Naive thymus-derived CD4-positive, alpha-beta T cell (primary cell): ENCODE measurements at regions of chr10 and their contacts with region 1.

Region 1: DNA sequence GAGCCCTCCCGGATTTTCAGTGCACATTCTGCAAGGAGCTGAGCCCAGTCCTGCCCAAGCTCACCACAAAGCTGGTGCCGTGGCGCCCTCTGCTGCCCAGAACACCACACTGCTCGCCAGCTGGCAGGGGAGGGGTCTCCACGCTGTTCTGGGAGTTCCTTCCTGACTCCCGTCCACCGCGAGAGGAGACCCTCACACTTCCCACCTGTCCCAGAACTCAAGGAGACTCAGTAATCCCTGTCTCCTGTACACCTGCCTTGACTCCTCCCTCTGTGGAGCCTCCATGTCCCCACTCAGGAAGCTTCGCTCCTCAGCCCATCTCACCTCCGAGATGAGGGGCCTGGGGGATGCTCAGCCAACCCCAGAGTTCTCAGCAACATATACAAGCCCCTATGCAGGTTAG is 11.3 kb downstream of the C10orf105 start:
- DNase-seq: peak; percentile 48 to 75 (median 59)
- ATAC-seq: peak; percentile 82
- H3K4me3 ChIP-seq: no peak overlapping the region
- H3K4me3 Mint-ChIP-seq: peak overlapping the region in 1 of 10 donors; percentile 27
- H3K27ac ChIP-seq: no peak overlapping the region
- H3K27ac Mint-ChIP-seq: peak overlapping the region in 2 of 9 donors; percentile 13 to 79
- H3K4me1 ChIP-seq: peaks cover 23 to 27% of the 10 kb centered on the region in 2 donors
- H3K4me1 Mint-ChIP-seq: peaks cover 21 to 61% (median 47%) of the 10 kb centered on the region in 7 donors
- H3K27me3 ChIP-seq: no peaks in the 10 kb centered on the region
- H3K27me3 Mint-ChIP-seq: no peaks in the 10 kb centered on the region

Region 2: DNA sequence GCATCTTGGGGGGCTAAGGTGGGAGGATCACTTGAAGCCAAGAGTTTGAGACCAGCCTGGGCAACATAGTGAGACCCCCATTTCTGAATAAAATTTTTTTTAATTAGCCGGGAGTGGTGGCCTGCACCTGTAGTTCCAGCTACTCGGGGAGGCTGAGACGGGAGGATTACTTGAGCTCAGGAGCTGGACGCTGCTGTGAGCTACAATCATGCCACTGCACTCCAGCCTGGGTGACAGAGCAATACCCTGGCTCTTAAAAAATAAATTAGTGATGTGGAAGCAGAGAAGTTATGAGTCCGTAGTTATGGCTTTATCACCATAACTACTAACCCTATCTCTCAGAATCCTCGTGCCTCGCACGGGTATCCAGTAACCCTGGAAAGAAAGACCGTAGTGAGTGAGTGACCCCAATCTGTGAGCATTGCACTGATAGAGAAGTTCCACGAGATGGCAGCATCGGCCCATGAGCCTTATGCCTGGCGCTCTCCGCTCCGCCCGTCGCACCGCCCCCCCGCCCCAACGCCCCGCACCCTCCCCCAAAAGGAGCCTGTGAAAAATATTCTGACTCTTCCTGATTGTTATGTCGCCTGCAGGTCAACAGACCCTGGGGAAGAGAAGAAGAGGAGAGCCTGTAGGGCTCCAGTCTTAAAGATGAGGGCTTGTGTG is 394.1 kb before region 1 on chr10:
- CTCF ChIA-PET with region 1: interaction called, 24 read pairs
- POLR2A ChIA-PET with region 1: interaction called, 3 read pairs
- intact Hi-C with region 1: loop called (anchors 1 kb)
- DNase-seq: peak; percentile 18 to 56 (median 49)
- ATAC-seq: peak; percentile 62
- H3K4me3 ChIP-seq: no peak overlapping the region
- H3K4me3 Mint-ChIP-seq: peak overlapping the region in 3 of 10 donors; percentile 3 to 48 (median 25)
- H3K27ac ChIP-seq: no peak overlapping the region
- H3K27ac Mint-ChIP-seq: peak overlapping the region in 1 of 9 donors; percentile 55
- H3K4me1 ChIP-seq: peaks cover 5 to 6% of the 10 kb centered on the region in 2 donors
- H3K4me1 Mint-ChIP-seq: peaks cover 0 to 26% (median 13%) of the 10 kb centered on the region in 7 donors
- H3K27me3 ChIP-seq: no peaks in the 10 kb centered on the region
- H3K27me3 Mint-ChIP-seq: peaks cover 0 to 16% (median 14%) of the 10 kb centered on the region in 5 donors

Region 3: DNA sequence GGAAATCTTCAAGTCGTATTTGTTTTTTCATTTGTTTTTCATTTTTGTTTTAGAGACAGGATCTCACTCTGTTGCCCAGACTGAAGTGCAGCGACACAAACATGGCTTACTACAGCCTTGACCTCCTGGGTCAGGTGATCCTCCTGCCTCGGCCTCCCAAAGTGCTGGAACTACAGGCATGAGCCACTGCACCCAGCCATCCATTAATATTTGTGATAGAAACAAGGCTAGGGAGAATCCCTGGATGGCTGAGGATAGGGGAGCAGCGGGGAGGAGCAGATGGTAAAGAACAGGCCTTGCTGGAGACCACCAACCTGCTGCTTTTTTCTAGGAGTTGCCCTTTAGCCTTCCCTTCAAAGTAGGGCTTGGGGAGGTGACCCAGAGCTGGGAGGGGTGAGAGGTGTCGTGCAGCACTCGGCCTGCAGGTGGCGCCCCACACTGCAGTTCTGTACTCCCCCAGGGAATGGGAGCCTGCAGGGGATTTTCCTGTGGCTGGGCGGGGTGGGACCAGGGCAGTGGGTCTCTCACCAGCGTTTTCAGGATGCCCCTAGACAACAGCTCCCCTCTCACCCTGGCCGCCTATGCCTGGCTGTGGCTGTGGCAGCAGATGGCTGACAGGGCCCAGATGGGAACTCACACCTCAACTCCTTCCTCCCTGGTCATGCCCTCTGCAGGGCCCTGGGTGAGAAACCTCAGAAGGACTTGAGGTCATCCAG is 324.2 kb before region 1 on chr10:
- CTCF ChIA-PET with region 1: interaction called, 11 read pairs
- POLR2A ChIA-PET with region 1: no interaction called
- intact Hi-C with region 1: loop called (anchors 1 kb)
- DNase-seq: peak; percentile 40 to 82 (median 61)
- ATAC-seq: peak; percentile 94
- H3K4me3 ChIP-seq: no peak overlapping the region
- H3K4me3 Mint-ChIP-seq: no peak overlapping the region
- H3K27ac ChIP-seq: no peak overlapping the region
- H3K27ac Mint-ChIP-seq: no peak overlapping the region
- H3K4me1 ChIP-seq: no peaks in the 10 kb centered on the region
- H3K4me1 Mint-ChIP-seq: no peaks in the 10 kb centered on the region
- H3K27me3 ChIP-seq: no peaks in the 10 kb centered on the region
- H3K27me3 Mint-ChIP-seq: peaks cover 0 to 24% (median 7%) of the 10 kb centered on the region in 5 donors

Region 4: DNA sequence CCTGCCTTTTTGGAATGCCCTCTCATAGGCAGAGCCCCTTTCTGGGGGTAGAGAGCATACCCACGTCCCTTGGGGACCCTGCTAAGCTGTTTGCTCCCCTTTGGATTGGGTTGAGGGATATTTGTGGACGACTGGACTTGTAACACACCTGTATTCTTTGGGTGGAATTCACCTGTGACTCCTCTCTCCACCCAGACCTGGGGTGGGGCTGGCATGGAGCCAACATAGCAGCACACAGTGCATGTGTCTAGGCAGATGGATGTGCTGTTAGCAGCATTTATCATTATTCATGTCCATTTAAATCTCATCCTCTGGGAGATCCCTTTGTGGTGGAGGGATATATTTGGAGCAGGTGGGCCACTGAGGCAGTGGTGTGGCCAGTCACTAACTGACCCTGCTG is 260.6 kb before region 1 on chr10:
- CTCF ChIA-PET with region 1: no interaction called
- POLR2A ChIA-PET with region 1: no interaction called
- intact Hi-C with region 1: no loop called
- DNase-seq: no peak
- ATAC-seq: no peak
- H3K4me3 ChIP-seq: no peak overlapping the region
- H3K4me3 Mint-ChIP-seq: no peak overlapping the region
- H3K27ac ChIP-seq: no peak overlapping the region
- H3K27ac Mint-ChIP-seq: no peak overlapping the region
- H3K4me1 ChIP-seq: no peaks in the 10 kb centered on the region
- H3K4me1 Mint-ChIP-seq: no peaks in the 10 kb centered on the region
- H3K27me3 ChIP-seq: no peaks in the 10 kb centered on the region
- H3K27me3 Mint-ChIP-seq: no peaks in the 10 kb centered on the region

Region 5: DNA sequence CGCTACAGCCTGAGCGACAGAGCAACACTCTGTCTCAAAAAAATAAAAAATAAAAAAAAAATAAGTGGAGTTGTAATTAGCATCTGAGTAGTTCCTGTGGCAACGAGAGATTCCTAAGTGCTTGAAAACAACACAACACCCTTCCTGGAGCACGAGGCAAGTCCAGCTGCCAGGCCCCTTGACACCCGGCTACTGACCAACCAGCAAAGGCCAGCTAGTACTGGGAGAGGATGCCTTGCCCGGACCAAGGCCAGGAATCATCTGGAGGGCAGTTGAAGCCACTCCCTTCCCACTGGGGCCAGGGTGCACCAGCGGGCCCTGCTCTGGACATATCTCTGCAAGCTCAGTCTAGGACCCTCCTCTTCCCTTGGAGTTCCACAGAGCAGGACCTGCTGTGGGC is 10.7 kb after region 1 on chr10:
- CTCF ChIA-PET with region 1: interaction called, 25 read pairs
- POLR2A ChIA-PET with region 1: interaction called, 150 read pairs
- intact Hi-C with region 1: no loop called
- DNase-seq: no peak
- ATAC-seq: no peak
- H3K4me3 ChIP-seq: no peak overlapping the region
- H3K4me3 Mint-ChIP-seq: no peak overlapping the region
- H3K27ac ChIP-seq: no peak overlapping the region
- H3K27ac Mint-ChIP-seq: peak overlapping the region in 3 of 9 donors; percentile 32 to 49 (median 41)
- H3K4me1 ChIP-seq: peaks cover 26 to 43% of the 10 kb centered on the region in 2 donors
- H3K4me1 Mint-ChIP-seq: peaks cover 25 to 74% (median 44%) of the 10 kb centered on the region in 7 donors
- H3K27me3 ChIP-seq: no peaks in the 10 kb centered on the region
- H3K27me3 Mint-ChIP-seq: no peaks in the 10 kb centered on the region

Region 6: GRCh38 chr10:71748671-71749191 is 40.4 kb after region 1 on chr10:
- CTCF ChIA-PET with region 1: interaction called, 13 read pairs
- POLR2A ChIA-PET with region 1: interaction called, 521 read pairs
- intact Hi-C with region 1: loop called (anchors 5 kb)
- DNase-seq: peak; percentile 53 to 93 (median 88)
- ATAC-seq: peak; percentile 87
- H3K4me3 ChIP-seq: peak overlapping the region; percentile 40
- H3K4me3 Mint-ChIP-seq: peak overlapping the region; percentile 74 to 90 (median 85)
- H3K27ac ChIP-seq: peak overlapping the region; percentile 74
- H3K27ac Mint-ChIP-seq: peak overlapping the region; percentile 95 to 99 (median 98)
- H3K4me1 ChIP-seq: peaks cover 93 to 99% of the 10 kb centered on the region in 2 donors
- H3K4me1 Mint-ChIP-seq: peaks cover 80 to 98% (median 93%) of the 10 kb centered on the region in 7 donors
- H3K27me3 ChIP-seq: no peaks in the 10 kb centered on the region
- H3K27me3 Mint-ChIP-seq: no peaks in the 10 kb centered on the region

Region 7: DNA sequence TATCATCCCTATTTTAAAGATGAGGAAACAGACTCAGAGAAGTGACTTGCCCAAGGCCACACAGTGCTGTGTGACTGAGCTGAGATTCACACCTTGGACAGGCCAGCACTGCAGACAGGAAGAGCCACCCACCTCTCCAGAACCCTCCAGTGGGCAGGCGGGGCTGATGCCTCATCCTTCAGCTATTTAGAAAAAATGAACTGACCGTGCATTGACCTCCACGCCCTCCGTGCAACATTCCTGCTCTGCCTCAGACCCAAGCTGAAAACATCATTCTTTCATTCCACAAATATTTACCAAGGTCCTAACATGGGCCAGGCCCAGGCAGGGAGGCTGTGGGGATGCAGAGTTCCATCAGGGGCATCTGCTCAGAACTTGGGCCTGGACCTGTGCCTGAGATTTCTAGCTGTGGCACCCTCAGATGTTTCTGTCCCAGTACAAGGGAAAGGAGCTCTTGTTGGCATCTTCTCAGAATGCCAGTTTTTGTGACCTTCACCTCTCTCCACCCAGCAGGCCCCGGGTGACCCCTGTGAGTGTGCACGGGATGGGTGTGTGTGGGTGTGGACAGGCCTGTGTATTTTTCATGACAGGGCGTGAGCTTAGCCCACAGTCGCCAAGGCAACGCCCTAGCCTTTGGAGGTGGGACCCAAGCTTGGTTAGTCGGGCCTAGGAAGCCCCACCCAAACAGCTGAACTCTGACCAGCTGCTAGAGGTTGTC is 58.6 kb after region 1 on chr10:
- CTCF ChIA-PET with region 1: interaction called, 38 read pairs
- POLR2A ChIA-PET with region 1: interaction called, 54 read pairs
- intact Hi-C with region 1: no loop called
- DNase-seq: no peak
- ATAC-seq: peak; percentile 36
- H3K4me3 ChIP-seq: no peak overlapping the region
- H3K4me3 Mint-ChIP-seq: peak overlapping the region; percentile 25 to 98 (median 71)
- H3K27ac ChIP-seq: peak overlapping the region; percentile 93
- H3K27ac Mint-ChIP-seq: peak overlapping the region; percentile 89 to 98 (median 95)
- H3K4me1 ChIP-seq: peaks cover 89 to 90% of the 10 kb centered on the region in 2 donors
- H3K4me1 Mint-ChIP-seq: peaks cover 71 to 96% (median 91%) of the 10 kb centered on the region in 7 donors
- H3K27me3 ChIP-seq: no peaks in the 10 kb centered on the region
- H3K27me3 Mint-ChIP-seq: no peaks in the 10 kb centered on the region

Region 8: GRCh38 chr10:71985542-71986250 is 277.4 kb after region 1 on chr10:
- CTCF ChIA-PET with region 1: no interaction called
- POLR2A ChIA-PET with region 1: no interaction called
- intact Hi-C with region 1: no loop called
- DNase-seq: no peak
- ATAC-seq: peak; percentile 50
- H3K4me3 ChIP-seq: no peak overlapping the region
- H3K4me3 Mint-ChIP-seq: no peak overlapping the region
- H3K27ac ChIP-seq: no peak overlapping the region
- H3K27ac Mint-ChIP-seq: peak overlapping the region in 1 of 9 donors; percentile 11
- H3K4me1 ChIP-seq: no peaks in the 10 kb centered on the region
- H3K4me1 Mint-ChIP-seq: peaks cover 0 to 13% (median 0%) of the 10 kb centered on the region in 7 donors
- H3K27me3 ChIP-seq: no peaks in the 10 kb centered on the region
- H3K27me3 Mint-ChIP-seq: peaks cover 0 to 8% (median 0%) of the 10 kb centered on the region in 5 donors

Region 9: DNA sequence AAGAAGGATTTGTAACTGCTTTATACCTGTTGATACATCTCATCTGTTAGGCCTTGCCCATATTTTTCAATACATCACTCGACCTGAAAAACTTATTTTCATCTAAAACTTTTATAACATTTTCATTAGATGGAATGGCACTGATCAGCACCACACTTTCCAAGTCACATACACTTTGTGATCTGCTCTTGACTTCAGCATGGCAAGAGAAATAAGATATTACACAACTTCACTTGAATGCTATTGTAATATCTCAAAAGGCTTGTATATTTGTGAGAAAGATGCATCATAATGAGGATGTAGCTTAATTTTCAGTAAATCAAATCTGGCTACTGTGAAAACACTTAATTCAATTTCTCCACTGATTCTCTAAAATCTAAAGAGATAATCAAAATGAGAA is 791.4 kb after region 1 on chr10:
- CTCF ChIA-PET with region 1: no interaction called
- POLR2A ChIA-PET with region 1: no interaction called
- intact Hi-C with region 1: no loop called
- DNase-seq: no peak
- ATAC-seq: no peak
- H3K4me3 ChIP-seq: no peak overlapping the region
- H3K4me3 Mint-ChIP-seq: no peak overlapping the region
- H3K27ac ChIP-seq: no peak overlapping the region
- H3K27ac Mint-ChIP-seq: no peak overlapping the region
- H3K4me1 ChIP-seq: no peaks in the 10 kb centered on the region
- H3K4me1 Mint-ChIP-seq: peaks cover 0 to 7% (median 7%) of the 10 kb centered on the region in 7 donors
- H3K27me3 ChIP-seq: no peaks in the 10 kb centered on the region
- H3K27me3 Mint-ChIP-seq: no peaks in the 10 kb centered on the region